ENCODE measurements at regions of chr22 and their contacts with region 1.

Region 1: DNA sequence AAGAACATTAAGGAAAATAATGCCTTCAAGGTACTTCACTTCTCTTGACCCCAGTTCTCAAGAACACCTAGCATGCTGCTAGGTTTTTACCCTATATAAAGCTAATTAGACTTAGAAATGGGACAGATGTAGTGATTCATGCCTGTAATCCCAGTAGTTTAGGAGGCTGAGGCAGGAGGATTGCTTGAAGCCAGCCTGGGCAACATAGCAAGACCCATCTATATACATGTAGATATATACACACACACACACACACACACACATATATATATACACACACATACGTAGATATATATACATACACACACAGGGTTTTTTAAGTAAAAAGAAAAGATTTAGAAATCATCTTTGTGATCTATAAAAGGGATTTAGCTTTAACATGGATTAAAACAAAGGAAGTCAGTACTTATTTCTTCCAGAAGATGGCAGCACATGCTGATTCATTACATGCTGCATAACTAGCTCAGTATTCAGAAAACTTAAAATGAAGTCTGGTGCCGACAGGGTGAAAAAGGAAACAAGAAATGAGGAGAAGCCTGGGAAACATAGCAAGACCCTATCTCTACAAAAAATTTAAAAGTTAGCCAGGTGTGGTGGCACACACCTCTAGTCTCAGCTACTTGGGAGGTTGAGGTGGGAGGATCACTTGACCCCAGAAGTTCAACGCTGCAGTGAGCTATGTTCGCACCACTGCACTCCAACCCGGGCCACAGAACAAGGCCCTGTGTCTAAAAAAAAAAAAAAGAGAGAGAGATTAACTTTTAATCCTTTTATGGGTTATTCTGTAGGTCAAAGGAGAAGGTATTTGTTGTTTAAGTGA is 28.5 kb upstream of the RBX1 start:
- DNase-seq: peak; percentile 8
- ATAC-seq: peak; percentile 92
- H3K4me3 Mint-ChIP-seq: no peak overlapping the region
- H3K27ac Mint-ChIP-seq: peak overlapping the region; percentile 13
- H3K4me1 Mint-ChIP-seq: peaks cover 4% of the 10 kb centered on the region
- H3K27me3 Mint-ChIP-seq: no peaks in the 10 kb centered on the region
- CTCF ChIP-seq: peak; percentile 86

Region 2: DNA sequence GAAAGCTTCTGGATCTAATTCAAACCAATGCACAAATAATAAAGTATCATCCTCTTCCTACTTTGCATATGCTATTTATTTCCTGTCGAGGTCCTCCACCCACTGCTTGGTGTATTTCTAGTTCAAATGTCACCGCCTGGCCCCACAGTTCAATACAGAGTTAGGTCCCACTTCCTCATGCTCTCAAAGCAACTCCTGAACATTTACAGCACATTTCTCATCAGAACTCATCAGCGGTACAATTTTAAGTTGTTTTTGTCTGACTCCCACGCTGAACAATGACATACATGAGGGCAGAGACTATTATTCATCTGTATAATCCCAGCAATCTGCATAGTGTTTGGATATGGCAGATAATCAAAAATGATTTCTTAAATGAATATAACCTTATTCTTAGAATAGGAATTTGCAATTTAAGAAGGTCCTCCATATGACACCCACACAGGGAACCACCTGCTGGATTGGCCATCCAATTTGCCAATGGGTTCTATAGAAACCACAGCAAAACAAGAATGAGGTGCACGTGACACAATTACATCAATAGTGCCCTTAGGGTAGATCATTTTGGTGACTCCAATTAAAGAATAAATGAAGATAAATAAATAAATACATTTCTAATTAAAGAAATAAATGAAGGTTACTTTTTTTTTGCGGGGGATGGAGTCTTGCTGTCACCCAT is 157.8 kb before region 1 on chr22:
- CTCF ChIA-PET with region 1: no interaction called
- POLR2A ChIA-PET with region 1: no interaction called
- intact Hi-C with region 1: no loop called
- DNase-seq: peak; percentile 53
- ATAC-seq: peak; percentile 72
- H3K4me3 Mint-ChIP-seq: no peak overlapping the region
- H3K27ac Mint-ChIP-seq: peak overlapping the region; percentile 86
- H3K4me1 Mint-ChIP-seq: peaks cover 17% of the 10 kb centered on the region
- H3K27me3 Mint-ChIP-seq: no peaks in the 10 kb centered on the region
- CTCF ChIP-seq: no peak

Region 3: DNA sequence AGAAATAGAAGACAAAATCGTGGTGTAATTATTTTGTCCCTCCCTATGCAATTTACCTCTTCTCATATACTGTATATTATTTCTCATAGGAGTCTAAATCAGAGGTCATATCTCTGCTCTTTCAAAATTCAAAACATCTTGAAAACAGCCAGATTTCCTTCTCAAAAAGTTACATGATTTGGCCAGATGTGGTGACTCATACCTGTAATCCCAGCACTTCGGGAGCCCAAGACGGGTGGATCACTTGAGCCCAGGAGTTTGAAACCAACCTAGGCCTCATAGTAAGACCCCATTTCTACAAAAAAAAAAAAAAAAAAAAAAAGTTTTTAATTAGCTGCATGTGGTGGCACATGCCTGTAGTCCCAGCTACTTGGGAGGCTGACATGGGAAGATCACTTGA is 31.8 kb before region 1 on chr22:
- CTCF ChIA-PET with region 1: interaction called, 10 read pairs
- POLR2A ChIA-PET with region 1: no interaction called
- intact Hi-C with region 1: no loop called
- DNase-seq: no peak
- ATAC-seq: no peak
- H3K4me3 Mint-ChIP-seq: no peak overlapping the region
- H3K27ac Mint-ChIP-seq: no peak overlapping the region
- H3K4me1 Mint-ChIP-seq: no peaks in the 10 kb centered on the region
- H3K27me3 Mint-ChIP-seq: no peaks in the 10 kb centered on the region
- CTCF ChIP-seq: no peak

Region 4: DNA sequence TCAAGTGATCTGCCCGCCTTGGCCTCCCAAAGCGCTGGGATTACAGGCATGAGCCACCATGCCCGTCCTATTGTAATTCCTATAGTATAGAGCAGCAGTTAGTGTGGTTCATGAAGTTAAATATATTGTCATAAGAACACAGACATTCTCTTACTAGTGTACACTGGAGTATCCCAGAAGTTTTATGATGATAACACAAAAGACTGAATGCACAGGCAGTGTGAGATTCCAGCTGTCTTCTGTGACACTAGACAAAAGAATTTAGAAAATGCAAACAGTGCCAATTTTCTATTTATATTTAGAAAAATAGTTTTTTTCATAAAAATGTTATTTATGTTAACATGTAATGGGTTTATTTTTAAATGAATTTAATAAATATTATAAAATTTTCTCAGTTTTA is 10.9 kb before region 1 on chr22:
- CTCF ChIA-PET with region 1: interaction called, 29 read pairs
- POLR2A ChIA-PET with region 1: no interaction called
- intact Hi-C with region 1: no loop called
- DNase-seq: no peak
- ATAC-seq: no peak
- H3K4me3 Mint-ChIP-seq: no peak overlapping the region
- H3K27ac Mint-ChIP-seq: no peak overlapping the region
- H3K4me1 Mint-ChIP-seq: no peaks in the 10 kb centered on the region
- H3K27me3 Mint-ChIP-seq: no peaks in the 10 kb centered on the region
- CTCF ChIP-seq: no peak

Region 5: GRCh38 chr22:41028841-41029240 is 106.1 kb after region 1 on chr22:
- CTCF ChIA-PET with region 1: interaction called, 13 read pairs
- POLR2A ChIA-PET with region 1: interaction called, 5 read pairs
- intact Hi-C with region 1: no loop called
- DNase-seq: no peak
- ATAC-seq: no peak
- H3K4me3 Mint-ChIP-seq: no peak overlapping the region
- H3K27ac Mint-ChIP-seq: no peak overlapping the region
- H3K4me1 Mint-ChIP-seq: no peaks in the 10 kb centered on the region
- H3K27me3 Mint-ChIP-seq: no peaks in the 10 kb centered on the region
- CTCF ChIP-seq: no peak

Region 6: GRCh38 chr22:41123151-41123550 is 200.5 kb after region 1 on chr22:
- CTCF ChIA-PET with region 1: interaction called, 10 read pairs
- POLR2A ChIA-PET with region 1: interaction called, 3 read pairs
- intact Hi-C with region 1: no loop called
- DNase-seq: no peak
- ATAC-seq: no peak
- H3K4me3 Mint-ChIP-seq: no peak overlapping the region
- H3K27ac Mint-ChIP-seq: peak overlapping the region; percentile 0
- H3K4me1 Mint-ChIP-seq: peaks cover 24% of the 10 kb centered on the region
- H3K27me3 Mint-ChIP-seq: no peaks in the 10 kb centered on the region
- CTCF ChIP-seq: no peak

Region 7: DNA sequence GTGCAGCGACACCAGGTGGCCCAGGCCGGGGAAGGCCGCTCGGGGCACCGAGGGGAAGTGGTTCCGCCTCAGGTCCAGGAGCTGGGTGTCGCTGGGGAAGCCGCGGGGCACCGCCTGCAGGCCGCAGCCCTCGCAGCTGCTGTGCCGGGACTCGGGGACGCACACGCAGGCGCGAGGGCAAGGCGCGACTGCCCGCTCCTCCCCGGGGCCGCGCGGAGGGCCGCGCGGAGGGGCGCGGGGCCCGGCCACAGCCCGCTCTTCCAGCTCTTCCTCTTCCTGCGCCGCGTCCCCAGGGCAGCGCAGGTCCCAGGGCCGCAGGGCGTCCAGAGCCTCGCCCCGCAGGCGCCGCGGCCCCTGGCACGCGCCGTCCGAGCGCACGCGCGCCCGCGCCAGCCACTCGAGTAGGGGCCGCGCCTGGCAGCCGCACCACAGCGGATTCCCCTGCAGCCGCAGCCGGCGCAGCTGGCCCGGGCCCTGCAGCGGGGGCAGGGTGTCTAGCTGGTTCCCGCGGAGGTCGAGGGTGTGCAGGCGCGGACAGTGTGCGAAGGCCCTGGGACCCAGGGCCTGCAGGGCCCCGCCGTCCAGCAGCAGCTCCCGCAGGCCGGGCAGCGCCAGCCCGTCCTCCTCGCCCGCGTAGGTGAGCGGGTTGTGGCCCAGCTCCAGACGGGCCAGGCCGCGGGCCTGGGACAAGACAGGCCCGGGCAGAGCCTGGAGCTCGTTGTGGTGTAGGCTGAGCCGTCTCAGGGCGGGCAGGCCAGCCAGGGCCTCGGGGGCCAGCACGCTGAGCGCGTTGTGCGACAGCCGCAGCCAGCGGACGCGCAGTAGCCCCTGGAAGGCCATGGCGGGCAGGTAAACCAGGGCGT is 315.2 kb after region 1 on chr22:
- CTCF ChIA-PET with region 1: interaction called, 80 read pairs
- POLR2A ChIA-PET with region 1: interaction called, 5 read pairs
- intact Hi-C with region 1: loop called (anchors 10 kb)
- DNase-seq: peak; percentile 86
- ATAC-seq: peak; percentile 96
- H3K4me3 Mint-ChIP-seq: peak overlapping the region; percentile 59
- H3K27ac Mint-ChIP-seq: no peak overlapping the region
- H3K4me1 Mint-ChIP-seq: peaks cover 7% of the 10 kb centered on the region
- H3K27me3 Mint-ChIP-seq: no peaks in the 10 kb centered on the region
- CTCF ChIP-seq: peak; percentile 12

Region 8: DNA sequence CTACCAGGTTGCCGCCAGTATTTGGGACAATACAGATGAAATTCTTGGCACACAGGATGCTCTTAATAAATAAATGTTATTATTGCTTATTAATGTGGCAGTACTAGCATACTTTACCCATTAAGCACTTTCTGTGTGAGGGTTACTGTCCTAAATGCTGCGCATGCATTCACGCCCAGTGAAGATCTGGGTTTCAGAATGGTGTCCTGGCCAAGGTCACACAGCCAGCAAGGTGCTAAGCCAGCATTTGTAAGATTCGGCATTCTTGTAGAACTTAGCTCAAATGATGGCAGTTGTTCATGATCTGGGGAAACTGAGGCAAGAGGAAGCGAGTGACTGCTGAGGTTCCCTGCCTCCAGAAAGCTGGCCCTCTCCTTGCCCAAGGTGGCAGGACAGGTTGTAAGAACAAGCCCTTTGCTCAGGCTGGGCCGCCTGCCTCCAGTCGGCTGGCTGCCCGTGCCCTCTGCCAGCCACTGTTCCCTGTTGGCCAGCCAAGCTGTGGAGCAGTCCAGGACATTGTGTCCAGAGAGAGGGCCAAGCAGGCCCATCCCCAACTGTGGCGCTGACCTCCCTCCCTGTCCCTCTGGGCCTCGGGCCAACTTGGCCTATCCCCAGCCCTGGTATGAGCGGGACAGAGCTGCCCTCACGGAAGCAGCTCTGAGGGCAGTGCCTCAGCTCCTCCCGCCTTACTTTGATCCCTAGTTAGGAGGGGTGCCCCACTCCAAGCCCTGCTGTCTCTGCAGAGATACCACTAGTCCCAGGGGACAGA is 495.1 kb after region 1 on chr22:
- CTCF ChIA-PET with region 1: no interaction called
- POLR2A ChIA-PET with region 1: no interaction called
- intact Hi-C with region 1: no loop called
- DNase-seq: no peak
- ATAC-seq: no peak
- H3K4me3 Mint-ChIP-seq: no peak overlapping the region
- H3K27ac Mint-ChIP-seq: peak overlapping the region; percentile 69
- H3K4me1 Mint-ChIP-seq: peaks cover 11% of the 10 kb centered on the region
- H3K27me3 Mint-ChIP-seq: no peaks in the 10 kb centered on the region
- CTCF ChIP-seq: no peak

Measured in activated CD8-positive, alpha-beta T cell treated with anti-CD3 and anti-CD28 coated beads for 36 hours (primary cell).